ENCODE measurements at regions of chr1 and their contacts with region 1.

Region 1: GRCh38 chr1:8858888-8859706 is 19.4 kb downstream of the ENO1 start:
- DNase-seq: peak; percentile 50 to 58 (median 55)
- H3K4me3 ChIP-seq: no peak overlapping the region
- H3K4me3 Mint-ChIP-seq: peak overlapping the region in 5 of 8 donors; percentile 2 to 43 (median 6)
- H3K27ac ChIP-seq: no peak overlapping the region
- H3K27ac Mint-ChIP-seq: peak overlapping the region; percentile 64 to 91 (median 76)
- H3K4me1 ChIP-seq: peaks cover 10% of the 10 kb centered on the region
- H3K4me1 Mint-ChIP-seq: peaks cover 10 to 32% (median 20%) of the 10 kb centered on the region in 4 donors
- H3K27me3 ChIP-seq: no peaks in the 10 kb centered on the region
- H3K27me3 Mint-ChIP-seq: no peaks in the 10 kb centered on the region

Region 2: DNA sequence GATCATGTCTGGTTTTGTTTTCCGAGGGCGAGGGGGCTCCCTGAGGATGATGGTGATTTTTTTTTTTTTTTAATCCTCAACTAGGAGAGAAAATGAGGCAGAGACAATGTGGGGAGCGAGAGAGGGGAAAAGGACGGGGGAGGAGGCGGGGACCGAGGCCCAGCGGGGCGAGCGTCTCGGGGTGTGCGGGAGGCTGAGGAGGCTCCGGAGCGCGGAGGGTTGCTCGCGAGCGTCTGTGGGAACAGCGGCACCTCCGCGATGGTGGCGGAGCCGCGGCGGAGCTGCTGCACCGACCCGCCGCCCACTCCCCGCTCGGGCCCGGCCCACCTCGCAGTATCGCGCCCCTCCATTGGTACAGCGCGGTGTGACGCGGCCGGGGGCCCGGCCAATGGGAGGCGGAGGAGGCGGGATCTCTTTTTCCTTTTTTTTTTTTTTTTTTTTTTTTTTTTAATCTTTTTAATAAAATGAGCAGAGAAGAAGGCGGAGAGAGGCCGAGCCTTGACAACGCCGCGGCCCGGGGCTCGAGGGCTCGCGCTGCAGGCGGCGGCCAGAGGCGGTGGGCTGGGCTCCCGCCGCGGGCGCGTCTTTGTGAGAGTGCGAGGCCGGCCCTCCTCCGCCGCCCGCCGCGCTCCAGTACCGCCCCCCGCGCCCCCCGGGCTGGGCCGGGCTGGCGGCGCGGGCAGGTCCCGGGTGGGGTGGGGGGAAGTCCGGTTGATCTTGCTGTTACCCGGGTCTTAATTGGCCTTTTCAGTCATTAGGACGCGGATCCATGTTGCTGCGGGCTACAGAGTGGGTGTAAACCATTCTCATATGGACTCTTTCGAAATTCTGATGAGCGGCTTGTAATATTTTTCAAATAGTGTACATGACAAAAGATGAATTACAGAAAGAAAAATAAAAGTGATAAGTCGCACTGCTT is 41.4 kb before region 1 on chr1 and contains the start of gene RERE:
- CTCF ChIA-PET with region 1: interaction called, 3 read pairs
- POLR2A ChIA-PET with region 1: interaction called, 3 read pairs
- intact Hi-C with region 1: loop called (anchors 5 kb)
- DNase-seq: peak; percentile 93 to 100 (median 98)
- H3K4me3 ChIP-seq: peak within 1 kb of the TSS; percentile 79 to 80
- H3K4me3 Mint-ChIP-seq: peak within 1 kb of the TSS; percentile 86 to 97 (median 94)
- H3K27ac ChIP-seq: peak within 1 kb of the TSS; percentile 81
- H3K27ac Mint-ChIP-seq: peak within 1 kb of the TSS; percentile 91 to 99 (median 98)
- H3K4me1 ChIP-seq: peaks cover 28% of the 10 kb centered on the region
- H3K4me1 Mint-ChIP-seq: peaks cover 24 to 40% (median 29%) of the 10 kb centered on the region in 4 donors
- H3K27me3 ChIP-seq: no peaks in the 10 kb centered on the region
- H3K27me3 Mint-ChIP-seq: peaks cover 2 to 3% of the 10 kb centered on the region in 2 donors
- total RNA-seq, gene RERE: 104 to 117 TPM

Region 3: GRCh38 chr1:8873506-8874229 is 14.6 kb after region 1 on chr1:
- CTCF ChIA-PET with region 1: interaction called, 118 read pairs
- POLR2A ChIA-PET with region 1: interaction called, 47 read pairs
- intact Hi-C with region 1: loop called (anchors 1 kb)
- DNase-seq: peak in 3 of 5 donors; percentile 13 to 89 (median 20)
- H3K4me3 ChIP-seq: no peak overlapping the region
- H3K4me3 Mint-ChIP-seq: peak overlapping the region in 6 of 8 donors; percentile 25 to 69 (median 42)
- H3K27ac ChIP-seq: peak overlapping the region; percentile 47
- H3K27ac Mint-ChIP-seq: peak overlapping the region; percentile 66 to 90 (median 77)
- H3K4me1 ChIP-seq: peaks cover 55% of the 10 kb centered on the region
- H3K4me1 Mint-ChIP-seq: peaks cover 38 to 81% (median 56%) of the 10 kb centered on the region in 4 donors
- H3K27me3 ChIP-seq: no peaks in the 10 kb centered on the region
- H3K27me3 Mint-ChIP-seq: no peaks in the 10 kb centered on the region